Astrocyte of the cerebellum (primary cell): ENCODE measurements at regions of chr10 and their contacts with region 1.

Region 1: GRCh38 chr10:110414563-110415309 is 83.0 kb upstream of the DUSP5 start:
- DNase-seq: no peak
- H3K4me3 ChIP-seq: no peak overlapping the region
- CTCF ChIP-seq: no peak

Region 2: DNA sequence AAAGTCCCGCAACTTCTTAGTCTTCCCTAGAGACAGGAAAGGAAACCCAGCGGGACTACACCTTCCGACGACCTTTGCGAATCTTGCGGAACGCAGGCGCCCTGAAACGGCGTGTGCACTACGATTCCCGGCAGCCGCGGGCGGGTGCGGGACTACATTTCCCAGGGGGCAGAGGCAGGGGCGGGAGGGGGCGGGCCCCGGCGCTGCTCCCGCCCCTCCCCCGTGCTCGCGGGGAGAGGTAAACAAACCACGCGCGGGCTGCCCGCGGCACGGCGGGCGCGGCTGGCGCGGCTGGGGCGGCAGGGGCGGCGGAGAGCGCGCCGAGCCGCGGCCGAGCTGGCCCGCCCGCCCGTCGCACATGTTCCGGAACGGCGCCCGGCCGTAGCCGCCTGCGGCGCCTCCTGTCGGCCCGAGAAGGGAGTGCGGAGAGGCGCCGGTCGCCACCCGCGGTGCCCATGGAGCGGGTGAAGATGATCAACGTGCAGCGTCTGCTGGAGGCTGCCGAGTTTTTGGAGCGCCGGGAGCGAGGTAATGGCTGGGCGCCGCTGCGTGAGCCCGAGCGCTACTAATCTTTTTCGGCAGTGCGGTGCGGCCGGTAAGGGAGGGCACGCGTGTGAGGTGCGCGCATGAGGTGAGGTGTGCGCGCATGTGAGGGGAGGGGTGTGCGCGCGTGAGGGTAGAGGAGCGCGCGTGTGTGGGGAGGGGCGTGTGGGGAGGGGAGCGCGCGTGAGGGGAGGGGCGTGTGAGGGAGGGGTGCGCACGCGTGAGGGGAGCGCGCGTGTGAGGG is 188.8 kb before region 1 on chr10:
- in situ Hi-C with region 1: no loop called
- DNase-seq: peak; percentile 84
- H3K4me3 ChIP-seq: peak overlapping the region; percentile 66
- CTCF ChIP-seq: peak; percentile 63

Region 3: GRCh38 chr10:110336111-110336721 is 78.5 kb before region 1 on chr10:
- in situ Hi-C with region 1: loop called (anchors 5 kb)
- DNase-seq: peak; percentile 94
- H3K4me3 ChIP-seq: no peak overlapping the region
- CTCF ChIP-seq: peak; percentile 19

Region 4: GRCh38 chr10:110356628-110357245 is 58.0 kb before region 1 on chr10:
- in situ Hi-C with region 1: no loop called
- DNase-seq: peak; percentile 65
- H3K4me3 ChIP-seq: no peak overlapping the region
- CTCF ChIP-seq: no peak

Region 5: DNA sequence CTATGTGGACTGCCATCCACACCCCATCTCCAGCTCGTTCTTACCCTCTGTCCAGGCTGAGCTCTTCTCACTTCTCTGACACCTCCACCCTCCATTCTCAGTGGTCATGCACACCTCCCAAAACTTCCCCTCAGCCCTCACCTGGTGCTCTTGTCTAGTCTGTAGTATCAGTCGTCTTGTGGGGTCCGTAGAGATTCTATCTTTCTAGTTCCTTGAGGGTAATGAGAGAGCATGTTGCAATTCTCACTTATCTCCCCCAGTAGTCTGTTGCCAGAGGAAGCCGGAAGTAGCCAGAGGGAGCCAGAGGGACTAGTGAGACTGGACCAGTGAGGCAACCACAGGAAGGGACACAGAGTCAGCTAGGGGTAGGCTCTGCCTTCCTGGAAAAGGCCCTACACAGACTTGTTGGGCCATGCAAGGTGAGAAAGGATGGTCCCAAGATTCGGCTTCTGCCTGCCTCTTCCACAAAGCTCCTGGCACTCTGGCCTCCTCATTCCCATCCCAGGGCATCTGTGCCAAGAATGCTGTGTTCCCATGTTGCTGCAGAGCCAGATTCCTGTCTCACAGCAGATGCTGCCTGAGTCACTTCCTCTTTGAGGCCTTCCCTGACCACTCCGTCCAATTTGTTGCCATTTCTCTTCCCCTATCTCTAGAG is 32.3 kb after region 1 on chr10:
- in situ Hi-C with region 1: loop called (anchors 5 kb)
- DNase-seq: peak; percentile 66
- H3K4me3 ChIP-seq: no peak overlapping the region
- CTCF ChIP-seq: peak; percentile 36

Region 6: GRCh38 chr10:110501142-110501937 is 86.6 kb after region 1 on chr10:
- in situ Hi-C with region 1: loop called (anchors 5 kb)
- DNase-seq: peak; percentile 91
- H3K4me3 ChIP-seq: no peak overlapping the region
- CTCF ChIP-seq: no peak